Naive thymus-derived CD4-positive, alpha-beta T cell (primary cell): ENCODE measurements at regions of chr3 and their contacts with region 1.

Region 1: GRCh38 chr3:108221911-108222852 is at the start of gene IFT57:
- DNase-seq: peak; percentile 89 to 97 (median 96)
- ATAC-seq: peak; percentile 97
- H3K4me3 ChIP-seq: peak within 1 kb of the TSS; percentile 59
- H3K4me3 Mint-ChIP-seq: peak within 1 kb of the TSS; percentile 93 to 99 (median 97)
- H3K27ac ChIP-seq: peak within 1 kb of the TSS; percentile 95
- H3K27ac Mint-ChIP-seq: peak within 1 kb of the TSS; percentile 95 to 100 (median 99)
- H3K4me1 ChIP-seq: peaks cover 21 to 24% of the 10 kb centered on the region in 2 donors
- H3K4me1 Mint-ChIP-seq: peaks cover 27 to 83% (median 62%) of the 10 kb centered on the region in 7 donors
- H3K27me3 ChIP-seq: no peaks in the 10 kb centered on the region
- H3K27me3 Mint-ChIP-seq: no peaks in the 10 kb centered on the region
- total RNA-seq, gene IFT57: 18.0 to 45.4 (median 26.4) TPM

Region 2: DNA sequence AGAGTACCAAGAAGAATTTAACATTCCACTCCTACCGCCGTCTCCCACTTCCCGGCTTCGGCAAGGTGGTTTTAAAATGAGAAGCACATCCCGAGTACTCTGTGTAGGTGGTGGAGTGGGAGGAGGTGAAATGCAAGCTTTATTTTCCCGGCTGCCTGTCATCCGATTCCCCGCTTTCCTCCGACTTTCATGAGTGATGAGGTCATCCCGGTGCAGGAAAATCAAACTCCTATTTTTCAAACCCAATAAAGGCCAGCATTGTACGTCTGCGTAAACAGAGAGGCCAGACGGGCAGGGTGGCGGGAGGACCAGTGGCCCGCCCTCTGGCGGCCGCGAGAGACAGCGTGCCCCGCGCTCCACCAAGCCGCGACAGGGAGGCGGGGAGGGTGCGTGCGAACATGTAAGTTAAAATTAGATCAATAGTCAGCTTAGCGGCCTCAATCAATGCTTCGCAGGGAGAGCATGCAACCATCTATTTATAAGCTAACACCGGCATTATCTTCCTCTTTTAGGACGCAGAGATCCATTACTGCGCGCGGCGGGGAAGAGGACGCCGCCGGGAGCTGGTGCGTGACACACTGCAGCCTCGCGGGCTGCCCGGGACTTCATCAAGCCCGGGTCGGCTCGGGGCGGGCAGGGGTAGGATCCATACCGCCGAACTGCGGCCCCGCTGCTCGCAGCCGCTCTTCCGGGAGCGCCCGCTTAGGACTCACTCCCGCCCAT is 294.7 kb before region 1 on chr3:
- CTCF ChIA-PET with region 1: no interaction called
- POLR2A ChIA-PET with region 1: no interaction called
- intact Hi-C with region 1: loop called in 1 of 2 experiments (anchors 2 kb)
- DNase-seq: peak; percentile 39 to 71 (median 57)
- ATAC-seq: peak; percentile 92
- H3K4me3 ChIP-seq: peak overlapping the region; percentile 60
- H3K4me3 Mint-ChIP-seq: peak overlapping the region; percentile 86 to 93 (median 89)
- H3K27ac ChIP-seq: no peak overlapping the region
- H3K27ac Mint-ChIP-seq: peak overlapping the region in 5 of 9 donors; percentile 26 to 88 (median 64)
- H3K4me1 ChIP-seq: peaks cover 5 to 6% of the 10 kb centered on the region in 2 donors
- H3K4me1 Mint-ChIP-seq: peaks cover 9 to 15% (median 13%) of the 10 kb centered on the region in 7 donors
- H3K27me3 ChIP-seq: peaks cover 0 to under 1% of the 10 kb centered on the region in 2 donors
- H3K27me3 Mint-ChIP-seq: peaks cover 0 to 17% (median 4%) of the 10 kb centered on the region in 5 donors

Region 3: GRCh38 chr3:108090701-108091451 is 131.3 kb before region 1 on chr3 and contains the start of gene CD47:
- CTCF ChIA-PET with region 1: interaction called, 5 read pairs
- POLR2A ChIA-PET with region 1: interaction called, 44 read pairs
- intact Hi-C with region 1: loop called (anchors 1 kb)
- DNase-seq: peak; percentile 94 to 98 (median 98)
- ATAC-seq: peak; percentile 85
- H3K4me3 ChIP-seq: peak within 1 kb of the TSS; percentile 92
- H3K4me3 Mint-ChIP-seq: peak within 1 kb of the TSS in 8 of 10 donors; percentile 85 to 100 (median 98)
- H3K27ac ChIP-seq: peak within 1 kb of the TSS; percentile 100
- H3K27ac Mint-ChIP-seq: peak within 1 kb of the TSS; percentile 94 to 100 (median 99)
- H3K4me1 ChIP-seq: peaks cover 43 to 50% of the 10 kb centered on the region in 2 donors
- H3K4me1 Mint-ChIP-seq: peaks cover 33 to 56% (median 41%) of the 10 kb centered on the region in 7 donors
- H3K27me3 ChIP-seq: no peaks in the 10 kb centered on the region
- H3K27me3 Mint-ChIP-seq: peaks cover 0 to 10% (median 0%) of the 10 kb centered on the region in 5 donors
- total RNA-seq, gene CD47: 130 to 232 (median 136) TPM

Region 4: GRCh38 chr3:108130701-108131474 is 91.3 kb before region 1 on chr3:
- CTCF ChIA-PET with region 1: interaction called, 4 read pairs
- POLR2A ChIA-PET with region 1: interaction called, 87 read pairs
- intact Hi-C with region 1: loop called in 1 of 2 experiments (anchors 1 kb)
- DNase-seq: no peak
- ATAC-seq: peak; percentile 16
- H3K4me3 ChIP-seq: no peak overlapping the region
- H3K4me3 Mint-ChIP-seq: peak overlapping the region in 7 of 10 donors; percentile 19 to 71 (median 55)
- H3K27ac ChIP-seq: no peak overlapping the region
- H3K27ac Mint-ChIP-seq: peak overlapping the region in 7 of 9 donors; percentile 21 to 98 (median 46)
- H3K4me1 ChIP-seq: peaks cover 63 to 82% of the 10 kb centered on the region in 2 donors
- H3K4me1 Mint-ChIP-seq: peaks cover 63 to 94% (median 92%) of the 10 kb centered on the region in 7 donors
- H3K27me3 ChIP-seq: no peaks in the 10 kb centered on the region
- H3K27me3 Mint-ChIP-seq: no peaks in the 10 kb centered on the region

Region 5: DNA sequence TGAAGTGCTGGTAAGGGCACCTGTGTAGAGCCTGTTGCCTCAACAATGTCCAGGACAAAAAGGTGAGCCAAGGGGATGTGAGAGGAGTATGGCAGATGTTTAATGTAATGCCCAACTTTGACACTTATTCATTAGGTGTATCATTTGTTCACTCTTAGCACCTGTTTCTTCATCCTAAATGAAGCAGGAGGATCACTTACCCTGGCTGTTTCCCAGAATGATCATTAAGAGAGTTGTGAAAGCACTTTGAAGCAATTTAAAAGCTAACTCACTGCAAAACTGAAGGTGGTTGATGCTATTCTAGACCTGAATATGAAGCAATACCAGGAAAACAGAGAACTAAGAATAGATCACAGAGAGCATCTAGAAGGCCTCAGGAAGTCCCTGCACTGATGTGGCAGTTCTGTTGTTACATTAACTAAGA is 70.7 kb after region 1 on chr3:
- CTCF ChIA-PET with region 1: no interaction called
- POLR2A ChIA-PET with region 1: no interaction called
- intact Hi-C with region 1: loop called (anchors 1 to 2 kb)
- DNase-seq: peak in 5 of 9 donors; percentile 26 to 45 (median 33)
- ATAC-seq: peak; percentile 73
- H3K4me3 ChIP-seq: no peak overlapping the region
- H3K4me3 Mint-ChIP-seq: peak overlapping the region in 8 of 10 donors; percentile 0 to 78 (median 37)
- H3K27ac ChIP-seq: peak overlapping the region; percentile 22
- H3K27ac Mint-ChIP-seq: peak overlapping the region in 8 of 9 donors; percentile 7 to 86 (median 60)
- H3K4me1 ChIP-seq: peaks cover 17 to 19% of the 10 kb centered on the region in 2 donors
- H3K4me1 Mint-ChIP-seq: peaks cover 23 to 62% (median 31%) of the 10 kb centered on the region in 7 donors
- H3K27me3 ChIP-seq: no peaks in the 10 kb centered on the region
- H3K27me3 Mint-ChIP-seq: no peaks in the 10 kb centered on the region

Region 6: DNA sequence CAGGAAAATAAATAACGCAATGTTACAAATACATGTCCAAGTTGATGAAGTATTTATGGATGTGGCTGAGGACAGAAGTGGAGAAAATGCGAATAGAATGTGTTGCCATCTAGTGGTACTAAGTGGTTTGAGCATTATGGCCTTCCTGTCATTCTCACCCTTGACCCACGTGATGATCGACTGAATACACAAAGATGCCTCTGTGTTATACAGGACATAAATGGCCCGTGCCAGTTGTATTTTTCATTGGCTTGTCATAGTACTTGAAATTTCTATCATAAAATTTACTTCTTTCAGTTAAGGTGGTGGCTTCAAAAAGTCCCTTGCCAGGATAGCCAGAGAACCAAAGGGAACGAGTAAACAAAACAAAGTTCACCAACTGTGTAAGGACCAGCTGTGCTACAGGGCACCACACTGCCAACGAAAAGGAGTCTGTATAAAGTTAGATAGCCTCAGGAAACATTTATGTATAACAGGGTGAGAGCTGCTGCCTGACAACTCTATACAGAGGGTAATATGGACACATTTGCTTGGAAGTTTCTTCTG is 184.6 kb after region 1 on chr3:
- CTCF ChIA-PET with region 1: no interaction called
- POLR2A ChIA-PET with region 1: no interaction called
- intact Hi-C with region 1: loop called (anchors 1 to 2 kb)
- DNase-seq: peak in 4 of 9 donors; percentile 18 to 57 (median 50)
- ATAC-seq: peak; percentile 82
- H3K4me3 ChIP-seq: no peak overlapping the region
- H3K4me3 Mint-ChIP-seq: no peak overlapping the region
- H3K27ac ChIP-seq: no peak overlapping the region
- H3K27ac Mint-ChIP-seq: peak overlapping the region in 1 of 9 donors; percentile 2
- H3K4me1 ChIP-seq: no peaks in the 10 kb centered on the region
- H3K4me1 Mint-ChIP-seq: peaks cover 0 to 6% (median 2%) of the 10 kb centered on the region in 7 donors
- H3K27me3 ChIP-seq: no peaks in the 10 kb centered on the region
- H3K27me3 Mint-ChIP-seq: peaks cover 0 to 6% (median 0%) of the 10 kb centered on the region in 5 donors

Region 7: GRCh38 chr3:108589146-108589997 is 367.2 kb after region 1 on chr3 and contains the starts of genes CIP2A and DZIP3:
- CTCF ChIA-PET with region 1: no interaction called
- POLR2A ChIA-PET with region 1: interaction called, 3 read pairs
- intact Hi-C with region 1: loop called (anchors 1 kb)
- DNase-seq: peak; percentile 74 to 88 (median 82)
- ATAC-seq: peak; percentile 83
- H3K4me3 ChIP-seq: peak within 1 kb of the TSS; percentile 87
- H3K4me3 Mint-ChIP-seq: peak within 1 kb of the TSS; percentile 94 to 99 (median 98)
- H3K27ac ChIP-seq: peak within 1 kb of the TSS; percentile 92
- H3K27ac Mint-ChIP-seq: peak within 1 kb of the TSS; percentile 95 to 100 (median 99)
- H3K4me1 ChIP-seq: peaks cover 11 to 15% of the 10 kb centered on the region in 2 donors
- H3K4me1 Mint-ChIP-seq: peaks cover 12 to 53% (median 39%) of the 10 kb centered on the region in 7 donors
- H3K27me3 ChIP-seq: no peaks in the 10 kb centered on the region
- H3K27me3 Mint-ChIP-seq: no peaks in the 10 kb centered on the region
- total RNA-seq, gene CIP2A: 3.4 to 44.2 (median 4.1) TPM
- total RNA-seq, gene DZIP3: 9.6 to 17.3 (median 14.6) TPM